ENCODE measurements at regions of chr4 and their contacts with region 1.

Region 1: DNA sequence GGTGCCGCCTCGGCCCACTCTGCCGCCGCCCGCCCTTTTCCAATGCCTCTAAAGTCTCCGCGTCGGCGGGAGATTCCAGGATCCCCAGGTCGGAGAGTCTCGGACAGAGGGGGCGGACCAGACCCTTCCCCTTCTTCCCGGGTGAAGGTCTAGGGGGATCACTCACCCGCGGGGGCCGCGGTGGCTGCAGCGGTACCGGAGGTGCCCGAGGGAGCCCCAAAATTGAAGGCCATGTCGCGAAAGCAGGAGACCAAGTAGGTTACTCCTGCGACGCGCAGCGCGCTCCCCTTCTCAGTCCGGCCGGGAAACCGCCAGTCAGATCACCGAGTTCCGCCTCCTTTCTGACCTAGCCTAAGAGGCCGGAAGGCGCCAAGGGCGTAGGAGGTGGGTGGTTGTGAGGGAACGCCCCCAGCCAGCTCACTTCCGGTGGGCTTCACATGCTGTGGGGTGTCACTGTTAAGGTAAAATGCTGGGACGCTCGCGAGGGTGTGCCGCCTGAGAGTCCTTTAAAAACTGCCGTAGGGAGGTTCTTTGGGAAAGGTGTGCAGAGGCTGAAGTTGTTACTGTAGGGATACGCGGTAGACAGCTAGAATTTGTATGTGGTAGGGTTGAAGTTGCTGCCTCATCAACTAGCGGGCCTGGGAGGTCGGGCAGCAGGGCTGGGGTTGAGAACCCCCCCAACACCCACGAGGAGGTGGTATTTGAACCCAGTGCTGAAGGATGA is at the start of gene NUP54:
- DNase-seq: peak; percentile 92
- H3K4me3 ChIP-seq: peak within 1 kb of the TSS; percentile 87 to 91
- H3K27ac ChIP-seq: peak within 1 kb of the TSS; percentile 88 to 90
- H3K4me1 ChIP-seq: peaks cover 12% of the 10 kb centered on the region
- H3K27me3 ChIP-seq: no peaks in the 10 kb centered on the region
- CTCF ChIP-seq: peak in 1 of 4 experiments; percentile 3
- POLR2A ChIP-seq: peak; percentile 81
- total RNA-seq, gene NUP54: 31.7 to 43.5 TPM

Region 2: GRCh38 chr4:75989846-75990528 is 158.3 kb before region 1 on chr4:
- intact Hi-C with region 1: loop called (anchors 5 kb)
- DNase-seq: no peak
- H3K4me3 ChIP-seq: peak overlapping the region; percentile 59 to 61
- H3K27ac ChIP-seq: peak overlapping the region; percentile 43 to 64
- H3K4me1 ChIP-seq: peaks cover 11% of the 10 kb centered on the region
- H3K27me3 ChIP-seq: no peaks in the 10 kb centered on the region
- CTCF ChIP-seq: no peak
- POLR2A ChIP-seq: no peak

Region 3: DNA sequence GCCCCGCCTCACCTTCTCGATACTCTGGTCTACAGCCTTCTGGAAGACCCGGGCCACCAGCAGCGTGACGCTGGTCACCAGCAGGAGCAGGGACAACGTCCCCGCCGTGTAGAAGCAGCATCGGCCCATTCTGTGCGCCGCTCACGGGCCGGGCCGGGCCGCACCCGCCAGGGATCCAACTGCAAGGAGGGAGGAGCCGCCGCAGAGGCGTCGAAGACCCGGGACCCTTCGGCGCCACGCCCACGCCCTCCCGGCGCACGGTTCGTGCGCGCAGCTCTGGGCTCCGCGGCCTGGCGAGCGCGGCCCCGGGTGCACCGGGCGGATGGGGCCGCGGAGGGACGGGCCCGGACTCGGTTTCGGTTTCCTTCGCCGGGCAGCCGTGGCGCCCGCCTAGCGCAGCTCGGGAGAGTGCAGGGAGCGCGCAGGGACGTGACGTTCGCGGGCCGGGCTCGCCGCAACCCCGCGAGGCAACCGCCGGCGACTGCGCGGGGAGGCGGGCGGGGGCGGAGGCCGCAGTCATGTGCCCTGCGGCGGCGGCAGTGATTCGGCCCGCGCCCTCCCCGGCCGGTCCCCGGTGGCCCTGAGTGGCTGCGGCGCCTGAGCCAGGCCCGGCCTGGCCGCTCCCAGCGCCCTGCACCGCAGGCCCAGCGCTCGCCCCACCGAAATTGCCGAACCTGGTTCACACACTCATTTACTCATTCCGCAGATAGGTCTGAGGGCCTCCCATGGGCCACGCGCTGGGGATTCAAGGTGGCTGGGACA is 65.3 kb after region 1 on chr4 and contains the start of gene SCARB2:
- intact Hi-C with region 1: loop called (anchors 10 kb)
- DNase-seq: peak; percentile 86
- H3K4me3 ChIP-seq: peak within 1 kb of the TSS; percentile 83 to 87
- H3K27ac ChIP-seq: peak within 1 kb of the TSS; percentile 96
- H3K4me1 ChIP-seq: peaks cover 20% of the 10 kb centered on the region
- H3K27me3 ChIP-seq: no peaks in the 10 kb centered on the region
- CTCF ChIP-seq: peak in 2 of 4 experiments; percentile 19 to 20
- POLR2A ChIP-seq: peak; percentile 87
- total RNA-seq, gene SCARB2: 169 to 392 TPM

Measured in prostate gland (tissue), 2 donors.